ENCODE measurements at regions of chr6 and their contacts with region 1.

Region 1: GRCh38 chr6:34248727-34249551 is at the start of gene SMIM29:
- DNase-seq: peak; percentile 96 to 98 (median 97)
- ATAC-seq: peak; percentile 84
- H3K4me3 ChIP-seq: peak within 1 kb of the TSS; percentile 76
- H3K27ac ChIP-seq: peak within 1 kb of the TSS; percentile 88
- H3K4me1 ChIP-seq: peaks cover 36 to 50% of the 10 kb centered on the region in 2 experiments
- H3K27me3 ChIP-seq: no peaks in the 10 kb centered on the region; a peak in 1 of 5 replicates
- CTCF ChIP-seq: peak; percentile 85 to 96 (median 95)
- EP300 ChIP-seq: peak; percentile 54; the same call in 1 of the 2 replicates
- POLR2A ChIP-seq: peak; percentile 85
- RAD21 ChIP-seq: peak; percentile 97 to 99
- polyA plus RNA-seq, gene SMIM29: 13.1 to 13.7 TPM

Region 2: DNA sequence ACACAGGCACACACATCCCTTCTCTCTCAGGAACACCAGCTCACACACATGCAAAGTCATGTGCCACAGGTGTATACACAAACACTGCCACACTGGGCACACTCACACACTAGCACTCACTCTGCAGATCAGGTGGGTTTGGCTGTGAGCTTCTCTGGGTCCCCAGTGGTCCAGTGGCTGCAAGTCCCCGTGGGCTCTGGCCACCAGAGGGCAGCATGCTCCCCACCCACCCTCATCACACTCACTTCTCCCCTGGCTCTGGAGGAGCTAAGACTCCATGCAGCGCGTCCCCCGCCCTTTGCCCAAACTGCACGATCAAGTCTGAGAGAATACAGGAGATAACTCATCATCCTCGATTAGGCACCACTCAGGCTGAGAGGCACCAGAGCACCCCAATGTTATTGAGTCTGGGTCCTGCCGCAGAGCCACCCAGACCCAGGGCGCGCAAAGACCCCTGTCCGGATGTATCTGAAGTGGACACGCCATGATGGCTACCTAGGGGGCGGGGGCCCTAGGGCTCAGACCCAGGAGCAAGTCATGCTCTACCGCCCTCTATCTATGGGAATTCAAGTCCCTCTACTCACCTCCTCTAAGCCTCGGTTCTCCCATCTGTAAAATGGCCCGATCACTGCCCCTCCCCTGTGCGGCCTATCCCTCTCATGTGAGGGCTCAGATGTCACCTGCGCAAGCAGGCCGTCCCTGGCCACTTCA is 193.6 kb before region 1 on chr6:
- CTCF ChIA-PET with region 1: no interaction called
- POLR2A ChIA-PET with region 1: no interaction called
- in situ Hi-C with region 1: no loop called
- intact Hi-C with region 1: loop called (anchors 5 kb)
- DNase-seq: peak; percentile 86 to 94 (median 92)
- ATAC-seq: peak; percentile 88
- H3K4me3 ChIP-seq: no peak overlapping the region
- H3K27ac ChIP-seq: no peak overlapping the region
- H3K4me1 ChIP-seq: peaks cover 5 to 25% of the 10 kb centered on the region in 2 experiments; a peak in 4 of 5 replicates
- H3K27me3 ChIP-seq: peaks cover 13 to 46% of the 10 kb centered on the region in 2 experiments; a peak in 4 of 5 replicates
- CTCF ChIP-seq: peak; percentile 90 to 96 (median 93)
- EP300 ChIP-seq: no peak
- POLR2A ChIP-seq: no peak
- RAD21 ChIP-seq: peak; percentile 43 to 71

Region 3: DNA sequence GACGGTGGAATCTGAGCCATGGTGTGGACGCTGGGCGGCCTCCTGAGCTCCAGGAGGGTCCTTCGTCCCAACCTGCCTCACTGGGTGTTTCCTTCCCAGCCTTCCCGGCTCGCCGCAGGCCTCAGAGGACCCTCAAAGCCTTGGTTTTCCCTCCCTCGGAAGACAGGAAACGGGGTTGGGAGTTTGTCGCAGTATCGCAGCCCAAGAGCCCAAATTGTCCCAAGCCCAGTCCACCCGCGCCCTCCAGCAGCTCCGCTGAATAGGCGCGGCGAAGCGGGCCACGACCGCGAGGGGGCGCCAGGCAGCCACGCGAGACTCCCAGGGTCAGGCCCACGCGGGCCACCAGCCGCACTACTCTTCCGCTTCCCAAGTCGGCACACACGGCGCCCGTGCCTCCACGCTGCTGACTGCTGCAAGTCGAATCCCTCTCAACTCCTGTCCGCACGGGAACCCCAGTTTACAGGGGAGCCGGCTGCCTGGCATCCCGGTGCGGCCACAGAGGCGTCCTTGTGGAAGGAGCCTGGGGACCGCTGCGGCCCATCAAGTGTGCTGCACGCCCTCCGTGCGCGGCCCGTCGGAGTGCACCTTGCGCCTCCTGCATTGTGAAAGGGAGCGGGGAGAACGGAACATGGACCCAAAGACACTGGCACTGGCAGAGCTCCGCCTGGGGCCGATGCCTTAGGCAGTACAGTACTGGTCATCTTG is 52.7 kb before region 1 on chr6:
- CTCF ChIA-PET with region 1: interaction called, 4 read pairs
- POLR2A ChIA-PET with region 1: interaction called, 10 read pairs
- in situ Hi-C with region 1: no loop called
- intact Hi-C with region 1: loop called (anchors 1 kb)
- DNase-seq: peak; percentile 94 to 96 (median 95)
- ATAC-seq: peak; percentile 97
- H3K4me3 ChIP-seq: no peak overlapping the region; the same call in 1 of the 2 replicates
- H3K27ac ChIP-seq: peak overlapping the region; percentile 46; the same call in 1 of the 3 replicates
- H3K4me1 ChIP-seq: peaks cover 13 to 22% of the 10 kb centered on the region in 2 experiments; a peak in 4 of 5 replicates
- H3K27me3 ChIP-seq: no peaks in the 10 kb centered on the region
- CTCF ChIP-seq: peak; percentile 94 to 98 (median 96)
- EP300 ChIP-seq: peak; percentile 39; the same call in 1 of the 2 replicates
- POLR2A ChIP-seq: peak; percentile 62
- RAD21 ChIP-seq: peak; percentile 97 to 99

Region 4: GRCh38 chr6:34317882-34318498 is 69.1 kb after region 1 on chr6:
- CTCF ChIA-PET with region 1: no interaction called
- POLR2A ChIA-PET with region 1: interaction called, 3 read pairs
- in situ Hi-C with region 1: no loop called
- intact Hi-C with region 1: loop called (anchors 2 kb)
- DNase-seq: no peak
- ATAC-seq: no peak
- H3K4me3 ChIP-seq: no peak overlapping the region
- H3K27ac ChIP-seq: peak overlapping the region; percentile 75; the same call in 2 of the 3 replicates
- H3K4me1 ChIP-seq: peaks cover 14 to 50% of the 10 kb centered on the region in 2 experiments
- H3K27me3 ChIP-seq: no peaks in the 10 kb centered on the region
- CTCF ChIP-seq: no peak
- EP300 ChIP-seq: no peak
- POLR2A ChIP-seq: no peak
- RAD21 ChIP-seq: no peak

Region 5: DNA sequence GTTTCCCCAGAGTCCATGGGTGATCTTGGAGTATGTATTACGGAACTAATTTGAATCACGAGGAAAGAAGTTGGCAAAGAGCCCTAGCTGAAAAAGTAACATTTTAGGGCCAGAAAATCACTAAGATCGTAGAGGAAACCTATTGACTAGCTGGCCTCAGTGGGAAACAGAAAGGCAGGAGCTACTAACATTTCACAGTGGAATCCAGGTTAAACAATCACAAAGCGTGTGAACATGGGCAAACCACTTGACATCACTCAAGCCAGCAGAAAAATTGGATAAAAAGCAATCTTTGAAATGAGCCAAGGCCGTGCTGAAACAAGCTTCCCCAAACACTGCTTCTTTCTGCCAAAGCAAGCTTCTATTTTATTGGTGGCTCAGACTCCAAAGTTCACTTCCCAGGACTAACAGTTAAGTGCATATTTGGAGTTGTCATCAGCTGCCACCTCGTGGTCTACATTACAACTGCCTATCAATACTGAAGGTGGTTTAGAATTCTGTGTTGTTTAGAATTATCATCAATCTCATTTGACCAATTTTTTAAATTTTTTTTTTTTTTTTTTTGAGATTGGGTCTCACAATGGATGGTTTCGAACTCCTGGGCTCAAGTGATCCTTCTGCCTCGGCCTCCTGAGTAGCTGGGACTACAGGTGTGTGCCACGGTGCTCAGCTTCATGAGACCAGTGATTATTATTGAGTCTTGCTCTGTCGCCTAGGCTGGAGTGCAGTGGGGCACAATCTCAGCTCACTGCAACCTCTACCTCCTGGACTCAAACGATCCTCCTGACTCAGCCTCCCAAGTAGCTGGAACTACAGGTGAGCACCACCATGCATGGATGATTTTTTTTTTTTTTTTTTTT is 166.3 kb after region 1 on chr6:
- CTCF ChIA-PET with region 1: interaction called, 27 read pairs
- POLR2A ChIA-PET with region 1: interaction called, 67 read pairs
- in situ Hi-C with region 1: loop called (anchors 5 kb)
- intact Hi-C with region 1: loop called (anchors 1 kb)
- DNase-seq: peak; percentile 50 to 82 (median 63)
- ATAC-seq: peak; percentile 85
- H3K4me3 ChIP-seq: no peak overlapping the region
- H3K27ac ChIP-seq: no peak overlapping the region; the same call in 2 of the 3 replicates
- H3K4me1 ChIP-seq: no peaks in the 10 kb centered on the region
- H3K27me3 ChIP-seq: no peaks in the 10 kb centered on the region
- CTCF ChIP-seq: peak; percentile 73 to 89 (median 78)
- EP300 ChIP-seq: no peak
- POLR2A ChIP-seq: no peak
- RAD21 ChIP-seq: peak; percentile 95 to 97

Region 6: GRCh38 chr6:34610819-34611477 is 362.0 kb after region 1 on chr6:
- CTCF ChIA-PET with region 1: interaction called, 5 read pairs
- POLR2A ChIA-PET with region 1: interaction called, 5 read pairs
- in situ Hi-C with region 1: loop called (anchors 5 kb)
- intact Hi-C with region 1: loop called (anchors 1 kb)
- DNase-seq: peak; percentile 48 to 82 (median 56)
- ATAC-seq: peak; percentile 84
- H3K4me3 ChIP-seq: no peak overlapping the region
- H3K27ac ChIP-seq: peak overlapping the region; percentile 43; the same call in 1 of the 3 replicates
- H3K4me1 ChIP-seq: peaks cover 6 to 37% of the 10 kb centered on the region in 2 experiments
- H3K27me3 ChIP-seq: no peaks in the 10 kb centered on the region
- CTCF ChIP-seq: no peak
- EP300 ChIP-seq: no peak; the same call in 1 of the 2 replicates
- POLR2A ChIP-seq: no peak
- RAD21 ChIP-seq: no peak